IMR-90 (cell line): ENCODE measurements at regions of chr7 and their contacts with region 1.

Region 1: GRCh38 chr7:3028071-3028757 is 15.5 kb downstream of the CARD11 start:
- DNase-seq: peak; percentile 46
- ATAC-seq: peak; percentile 61
- H3K4me3 ChIP-seq: no peak overlapping the region
- H3K27ac ChIP-seq: no peak overlapping the region
- H3K4me1 ChIP-seq: peaks cover 4% of the 10 kb centered on the region; the same call in 1 of the 2 replicates
- H3K27me3 ChIP-seq: no peaks in the 10 kb centered on the region; the same call in 1 of the 2 replicates
- CTCF ChIP-seq: no peak
- POLR2A ChIP-seq: no peak
- RAD21 ChIP-seq: no peak

Region 2: GRCh38 chr7:2863461-2864066 is 164.7 kb before region 1 on chr7:
- CTCF ChIA-PET with region 1: no interaction called
- POLR2A ChIA-PET with region 1: no interaction called
- dilution Hi-C with region 1: no loop called
- in situ Hi-C with region 1: no loop called
- intact Hi-C with region 1: no loop called
- DNase-seq: peak; percentile 97
- ATAC-seq: peak; percentile 95
- H3K4me3 ChIP-seq: no peak overlapping the region
- H3K27ac ChIP-seq: peak overlapping the region; percentile 97
- H3K4me1 ChIP-seq: peaks cover 13% of the 10 kb centered on the region
- H3K27me3 ChIP-seq: no peaks in the 10 kb centered on the region
- CTCF ChIP-seq: no peak
- POLR2A ChIP-seq: peak; percentile 87
- RAD21 ChIP-seq: peak; percentile 11; the same call in 1 of the 2 replicates

Region 3: GRCh38 chr7:2999078-2999500 is 29.1 kb before region 1 on chr7:
- CTCF ChIA-PET with region 1: no interaction called
- POLR2A ChIA-PET with region 1: no interaction called
- dilution Hi-C with region 1: no loop called
- in situ Hi-C with region 1: no loop called
- intact Hi-C with region 1: loop called (anchors 2 kb)
- DNase-seq: no peak
- ATAC-seq: no peak
- H3K4me3 ChIP-seq: no peak overlapping the region
- H3K27ac ChIP-seq: no peak overlapping the region
- H3K4me1 ChIP-seq: no peaks in the 10 kb centered on the region
- H3K27me3 ChIP-seq: no peaks in the 10 kb centered on the region; the same call in 1 of the 2 replicates
- CTCF ChIP-seq: no peak
- POLR2A ChIP-seq: no peak
- RAD21 ChIP-seq: no peak

Region 4: GRCh38 chr7:4650433-4651047 is 1622.3 kb after region 1 on chr7:
- CTCF ChIA-PET with region 1: no interaction called
- POLR2A ChIA-PET with region 1: interaction called, 11 read pairs
- dilution Hi-C with region 1: no loop called
- in situ Hi-C with region 1: no loop called
- intact Hi-C with region 1: no loop called
- DNase-seq: peak; percentile 23
- ATAC-seq: peak; percentile 46
- H3K4me3 ChIP-seq: no peak overlapping the region
- H3K27ac ChIP-seq: peak overlapping the region; percentile 4; the same call in 1 of the 2 replicates
- H3K4me1 ChIP-seq: peaks cover 7% of the 10 kb centered on the region
- H3K27me3 ChIP-seq: no peaks in the 10 kb centered on the region
- CTCF ChIP-seq: no peak
- POLR2A ChIP-seq: no peak
- RAD21 ChIP-seq: no peak